MCF 10A (cell line): ENCODE measurements at regions of chr1 and their contacts with region 1.

Region 1: GRCh38 chr1:157963713-157964112 is 29.7 kb upstream of the KIRREL1 start:
- DNase-seq: peak; percentile 91
- H3K4me3 Mint-ChIP-seq: no peak overlapping the region
- H3K27ac Mint-ChIP-seq: no peak overlapping the region
- H3K4me1 Mint-ChIP-seq: peaks cover 25% of the 10 kb centered on the region
- H3K27me3 Mint-ChIP-seq: peaks cover 18% of the 10 kb centered on the region
- CTCF ChIP-seq: peak; percentile 99

Region 2: DNA sequence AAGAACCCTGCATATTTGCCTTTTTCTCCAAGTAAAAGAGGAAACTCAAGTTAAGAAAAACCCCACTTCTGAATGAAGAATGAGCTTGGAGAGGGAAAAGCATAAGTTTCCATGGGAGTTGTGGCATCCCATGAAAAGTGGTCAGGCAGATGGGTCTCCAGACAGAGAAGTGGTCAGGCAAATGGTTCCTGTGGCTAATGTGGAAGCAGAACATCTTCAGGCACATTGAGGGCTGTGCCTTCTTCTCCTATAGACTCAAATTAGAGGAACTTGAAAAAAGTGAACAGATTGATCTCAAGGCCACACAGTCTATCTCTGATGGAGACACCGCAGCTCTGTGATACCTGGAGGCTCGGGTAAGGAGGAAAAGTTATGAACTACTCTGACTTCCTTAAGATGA is 26.0 kb before region 1 on chr1:
- CTCF ChIA-PET with region 1: interaction called, 156 read pairs
- POLR2A ChIA-PET with region 1: no interaction called
- intact Hi-C with region 1: no loop called
- DNase-seq: no peak
- H3K4me3 Mint-ChIP-seq: no peak overlapping the region
- H3K27ac Mint-ChIP-seq: no peak overlapping the region
- H3K4me1 Mint-ChIP-seq: no peaks in the 10 kb centered on the region
- H3K27me3 Mint-ChIP-seq: peaks cover 40% of the 10 kb centered on the region
- CTCF ChIP-seq: no peak

Region 3: GRCh38 chr1:158019171-158019868 is 55.6 kb after region 1 on chr1:
- CTCF ChIA-PET with region 1: interaction called, 20 read pairs
- POLR2A ChIA-PET with region 1: interaction called, 4 read pairs
- intact Hi-C with region 1: no loop called
- DNase-seq: peak; percentile 92
- H3K4me3 Mint-ChIP-seq: peak overlapping the region; percentile 20
- H3K27ac Mint-ChIP-seq: peak overlapping the region; percentile 86
- H3K4me1 Mint-ChIP-seq: peaks cover 74% of the 10 kb centered on the region
- H3K27me3 Mint-ChIP-seq: no peaks in the 10 kb centered on the region
- CTCF ChIP-seq: no peak

Region 4: DNA sequence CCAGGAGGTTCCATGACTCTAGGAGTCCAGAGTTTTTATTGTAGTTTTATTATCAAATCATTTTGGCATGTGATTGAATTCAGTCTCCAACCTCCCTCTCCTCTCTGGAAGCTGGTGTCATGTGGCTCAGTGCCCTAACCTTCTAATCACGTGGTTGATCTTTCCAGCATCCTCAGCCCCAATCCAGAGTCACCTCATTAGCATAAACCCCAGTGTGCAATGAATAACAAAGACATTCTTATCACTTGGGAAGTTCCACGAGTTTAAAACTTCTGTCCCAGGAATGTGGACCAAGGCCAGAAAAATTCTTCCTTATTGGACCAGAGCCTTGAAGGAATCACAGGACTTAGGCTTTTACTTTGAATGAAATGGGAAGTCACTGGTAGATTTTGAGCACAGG is 81.9 kb after region 1 on chr1:
- CTCF ChIA-PET with region 1: interaction called, 49 read pairs
- POLR2A ChIA-PET with region 1: no interaction called
- intact Hi-C with region 1: no loop called
- DNase-seq: no peak
- H3K4me3 Mint-ChIP-seq: no peak overlapping the region
- H3K27ac Mint-ChIP-seq: no peak overlapping the region
- H3K4me1 Mint-ChIP-seq: peaks cover 20% of the 10 kb centered on the region
- H3K27me3 Mint-ChIP-seq: no peaks in the 10 kb centered on the region
- CTCF ChIP-seq: no peak

Region 5: DNA sequence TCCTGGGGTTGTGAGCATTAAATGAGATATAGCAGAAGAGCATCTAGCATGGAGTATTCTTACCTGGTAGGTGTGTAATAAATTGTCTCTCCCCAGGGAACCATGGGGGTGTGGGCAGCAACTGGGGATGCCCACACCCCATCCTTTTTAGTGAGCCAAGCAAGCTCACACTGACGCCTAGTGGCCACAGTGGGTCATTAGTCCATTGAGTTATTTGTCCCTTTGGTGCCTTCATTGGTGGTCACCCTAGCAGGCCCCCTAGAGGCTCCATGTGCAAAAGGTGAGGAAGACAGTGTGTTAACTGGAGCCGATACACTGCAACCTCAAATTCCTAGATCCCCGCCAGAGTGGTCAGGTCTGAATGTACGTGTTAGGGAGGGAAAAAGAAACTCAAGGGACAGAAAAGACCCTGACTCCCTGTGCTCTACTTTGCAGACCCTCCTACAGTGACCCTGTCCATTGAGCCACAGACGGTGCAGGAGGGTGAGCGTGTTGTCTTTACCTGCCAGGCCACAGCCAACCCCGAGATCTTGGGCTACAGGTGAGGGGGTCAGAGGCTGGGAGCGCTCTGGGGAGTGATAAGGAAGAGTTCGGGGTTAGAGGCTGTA is 123.7 kb after region 1 on chr1:
- CTCF ChIA-PET with region 1: interaction called, 78 read pairs
- POLR2A ChIA-PET with region 1: interaction called, 4 read pairs
- intact Hi-C with region 1: loop called (anchors 1 kb)
- DNase-seq: peak; percentile 85
- H3K4me3 Mint-ChIP-seq: no peak overlapping the region
- H3K27ac Mint-ChIP-seq: no peak overlapping the region
- H3K4me1 Mint-ChIP-seq: no peaks in the 10 kb centered on the region
- H3K27me3 Mint-ChIP-seq: no peaks in the 10 kb centered on the region
- CTCF ChIP-seq: peak; percentile 98

Region 6: GRCh38 chr1:158145173-158145719 is 181.5 kb after region 1 on chr1:
- CTCF ChIA-PET with region 1: interaction called, 13 read pairs
- POLR2A ChIA-PET with region 1: interaction called, 3 read pairs
- intact Hi-C with region 1: no loop called
- DNase-seq: peak; percentile 98
- H3K4me3 Mint-ChIP-seq: no peak overlapping the region
- H3K27ac Mint-ChIP-seq: peak overlapping the region; percentile 21
- H3K4me1 Mint-ChIP-seq: peaks cover 44% of the 10 kb centered on the region
- H3K27me3 Mint-ChIP-seq: no peaks in the 10 kb centered on the region
- CTCF ChIP-seq: no peak